ENCODE measurements at regions of chr9 and their contacts with region 1.

Region 1: DNA sequence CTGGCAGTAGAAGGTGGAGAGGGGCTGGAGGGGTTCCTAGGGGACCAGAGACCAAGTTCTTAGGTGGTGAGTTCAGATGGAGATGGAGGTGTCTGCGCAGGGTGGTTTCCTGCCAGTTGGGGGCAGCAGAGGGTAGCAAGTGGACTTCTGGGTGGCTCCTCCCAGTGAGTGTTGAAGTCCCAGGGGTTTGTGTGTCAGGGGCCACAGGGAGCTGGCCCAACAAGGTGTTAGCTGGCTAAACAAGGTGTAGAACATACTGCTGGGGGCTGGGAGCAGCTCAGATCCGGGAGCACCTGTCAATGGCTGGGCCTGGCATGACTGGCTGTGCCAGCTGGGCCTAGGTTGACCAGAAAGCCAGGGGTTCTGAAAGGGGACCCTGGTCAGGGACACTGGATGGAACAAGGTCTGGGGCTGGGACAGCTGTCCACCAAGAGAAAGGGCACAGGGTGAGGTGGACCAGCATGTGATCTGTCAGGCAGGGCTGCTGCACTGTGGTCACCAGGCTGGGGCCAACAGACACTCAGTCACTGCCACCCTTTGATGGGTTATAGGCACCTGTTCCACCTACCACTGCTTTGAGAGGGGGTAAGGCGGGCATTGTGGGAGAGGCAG is 35.6 kb downstream of the DAB2IP start:
- DNase-seq: peak; percentile 43
- ATAC-seq: peak; percentile 90
- H3K4me3 ChIP-seq: no peak overlapping the region
- H3K27ac ChIP-seq: no peak overlapping the region
- H3K4me1 ChIP-seq: peaks cover 0 to 23% of the 10 kb centered on the region in 2 experiments; a peak in 3 of 4 replicates
- H3K27me3 ChIP-seq: no peaks in the 10 kb centered on the region
- CTCF ChIP-seq: peak; percentile 86 to 97 (median 93)
- POLR2A ChIP-seq: no peak
- RAD21 ChIP-seq: peak; percentile 94

Region 2: GRCh38 chr9:121529237-121529987 is 157.6 kb before region 1 on chr9:
- CTCF ChIA-PET with region 1: no interaction called
- POLR2A ChIA-PET with region 1: no interaction called
- RAD21 ChIA-PET with region 1: no interaction called
- intact Hi-C with region 1: no loop called
- DNase-seq: no peak
- ATAC-seq: peak; percentile 74
- H3K4me3 ChIP-seq: no peak overlapping the region
- H3K27ac ChIP-seq: peak overlapping the region; percentile 0; the same call in 1 of the 2 replicates
- H3K4me1 ChIP-seq: peaks cover 5 to 10% of the 10 kb centered on the region in 2 experiments; a peak in 3 of 4 replicates
- H3K27me3 ChIP-seq: no peaks in the 10 kb centered on the region
- CTCF ChIP-seq: no peak
- POLR2A ChIP-seq: no peak
- RAD21 ChIP-seq: no peak

Region 3: GRCh38 chr9:121640076-121640475 is 47.0 kb before region 1 on chr9:
- CTCF ChIA-PET with region 1: interaction called, 17 read pairs
- POLR2A ChIA-PET with region 1: no interaction called
- RAD21 ChIA-PET with region 1: interaction called in 1 of 2 experiments, 3 read pairs
- intact Hi-C with region 1: loop called (anchors 5 kb)
- DNase-seq: no peak
- ATAC-seq: peak; percentile 88
- H3K4me3 ChIP-seq: no peak overlapping the region
- H3K27ac ChIP-seq: no peak overlapping the region
- H3K4me1 ChIP-seq: peaks cover 16 to 24% of the 10 kb centered on the region in 2 experiments
- H3K27me3 ChIP-seq: no peaks in the 10 kb centered on the region
- CTCF ChIP-seq: peak; percentile 53 to 74 (median 74); a peak in 5 of 6 replicates
- POLR2A ChIP-seq: no peak
- RAD21 ChIP-seq: peak; percentile 79

Region 4: GRCh38 chr9:121658166-121658565 is 28.9 kb before region 1 on chr9:
- CTCF ChIA-PET with region 1: interaction called, 11 read pairs
- POLR2A ChIA-PET with region 1: no interaction called
- RAD21 ChIA-PET with region 1: no interaction called
- intact Hi-C with region 1: no loop called
- DNase-seq: no peak
- ATAC-seq: no peak
- H3K4me3 ChIP-seq: no peak overlapping the region
- H3K27ac ChIP-seq: no peak overlapping the region
- H3K4me1 ChIP-seq: peaks cover 3 to 12% of the 10 kb centered on the region in 2 experiments; a peak in 2 of 4 replicates
- H3K27me3 ChIP-seq: no peaks in the 10 kb centered on the region
- CTCF ChIP-seq: no peak
- POLR2A ChIP-seq: no peak
- RAD21 ChIP-seq: no peak

Region 5: DNA sequence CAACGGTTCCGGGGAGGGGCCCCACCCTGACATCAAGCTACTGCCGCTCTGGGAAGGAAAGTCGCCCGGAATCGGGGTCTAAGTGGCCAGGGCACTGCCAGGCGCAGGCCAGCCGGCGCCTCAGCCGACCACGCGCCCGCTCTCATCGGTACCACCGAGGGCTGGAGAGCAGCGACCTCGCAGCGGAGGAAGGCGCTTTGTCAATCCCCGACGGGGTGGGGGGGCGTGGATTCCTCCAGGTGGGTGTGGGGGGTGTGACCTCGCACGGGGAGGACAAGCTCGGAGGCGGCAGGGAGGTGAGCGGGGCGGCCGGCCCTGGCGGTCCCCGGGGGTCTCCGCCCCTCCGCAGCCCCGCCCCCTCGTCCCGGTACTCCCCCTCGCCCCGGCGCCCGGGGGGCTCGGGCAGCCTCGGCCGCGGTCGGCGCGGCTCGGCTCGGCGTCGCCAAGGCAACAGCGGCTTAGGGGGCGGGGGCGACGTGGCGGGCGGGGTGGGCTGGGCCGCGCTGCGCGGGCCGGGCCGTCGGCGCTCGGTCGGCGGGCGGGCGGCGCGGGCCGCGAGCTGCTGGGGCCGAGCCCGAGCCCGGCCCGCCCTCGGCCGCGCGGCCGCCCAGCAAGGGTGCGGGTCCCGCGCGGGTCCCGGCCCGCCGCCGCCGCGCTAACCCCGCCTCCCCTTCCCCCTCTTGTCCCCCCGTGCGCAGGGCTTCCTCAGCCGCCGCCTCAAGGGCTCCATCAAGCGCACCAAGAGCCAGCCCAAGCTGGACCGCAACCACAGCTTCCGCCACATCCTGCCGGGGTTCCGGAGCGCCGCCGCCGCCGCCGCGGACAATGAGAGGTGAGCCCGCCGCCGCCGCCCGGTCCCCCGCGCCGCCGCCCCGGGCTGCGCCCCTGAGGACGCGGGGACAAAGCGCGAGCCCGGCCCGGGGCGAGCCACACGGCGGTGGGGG is 11.9 kb after region 1 on chr9:
- CTCF ChIA-PET with region 1: interaction called, 11 read pairs
- POLR2A ChIA-PET with region 1: no interaction called
- RAD21 ChIA-PET with region 1: no interaction called
- intact Hi-C with region 1: no loop called
- DNase-seq: no peak
- ATAC-seq: peak; percentile 74
- H3K4me3 ChIP-seq: peak overlapping the region; percentile 70 to 73
- H3K27ac ChIP-seq: peak overlapping the region; percentile 64; the same call in 1 of the 2 replicates
- H3K4me1 ChIP-seq: peaks cover 2 to 17% of the 10 kb centered on the region in 2 experiments; a peak in 3 of 4 replicates
- H3K27me3 ChIP-seq: no peaks in the 10 kb centered on the region
- CTCF ChIP-seq: no peak
- POLR2A ChIP-seq: no peak
- RAD21 ChIP-seq: no peak

Region 6: DNA sequence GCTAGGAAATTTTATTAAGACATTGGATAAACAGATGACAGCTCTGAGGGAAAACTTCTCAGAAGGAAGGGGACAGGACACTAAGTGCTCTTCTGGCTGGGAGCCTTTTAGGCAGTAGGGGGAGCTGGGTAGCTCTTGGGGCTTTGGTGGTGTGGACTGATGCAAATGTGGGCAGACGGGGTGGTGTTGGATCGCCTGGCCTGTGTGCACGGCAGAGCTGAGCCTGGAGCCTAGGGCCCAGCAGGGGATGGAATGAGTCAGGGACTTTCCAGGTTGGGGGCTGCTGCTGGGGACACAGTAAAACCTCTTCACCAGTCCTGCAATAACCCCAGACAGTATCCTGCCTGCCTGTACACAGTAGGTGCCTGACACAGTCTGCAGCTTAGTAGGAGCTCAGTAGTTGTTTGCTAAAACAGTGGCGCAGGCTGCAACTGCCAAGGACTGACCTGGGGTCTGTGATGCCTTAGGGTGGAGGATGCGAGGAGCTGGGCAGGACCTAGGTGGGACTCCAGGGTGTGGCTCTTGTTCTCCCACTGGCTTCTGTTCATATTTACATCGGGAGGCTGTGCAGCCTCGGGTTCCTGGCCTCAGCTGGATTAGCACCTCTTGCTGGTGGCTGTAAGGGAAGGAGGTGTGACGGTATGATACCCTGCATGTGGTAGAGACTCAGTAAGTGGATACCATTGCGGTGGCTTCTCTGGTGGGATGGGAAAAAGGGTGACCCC is 48.2 kb after region 1 on chr9:
- CTCF ChIA-PET with region 1: no interaction called
- POLR2A ChIA-PET with region 1: no interaction called
- RAD21 ChIA-PET with region 1: no interaction called
- intact Hi-C with region 1: loop called (anchors 5 kb)
- DNase-seq: no peak
- ATAC-seq: peak; percentile 81
- H3K4me3 ChIP-seq: peak overlapping the region; percentile 43 to 56
- H3K27ac ChIP-seq: peak overlapping the region; percentile 41
- H3K4me1 ChIP-seq: peaks cover 40 to 43% of the 10 kb centered on the region in 2 experiments
- H3K27me3 ChIP-seq: no peaks in the 10 kb centered on the region
- CTCF ChIP-seq: peak in 2 of 3 experiments; percentile 62 to 83; a peak in 4 of 6 replicates
- POLR2A ChIP-seq: no peak
- RAD21 ChIP-seq: no peak

Region 7: GRCh38 chr9:121798941-121799340 is 111.9 kb after region 1 on chr9:
- CTCF ChIA-PET with region 1: no interaction called
- POLR2A ChIA-PET with region 1: no interaction called
- RAD21 ChIA-PET with region 1: no interaction called
- intact Hi-C with region 1: no loop called
- DNase-seq: no peak
- ATAC-seq: no peak
- H3K4me3 ChIP-seq: no peak overlapping the region
- H3K27ac ChIP-seq: no peak overlapping the region
- H3K4me1 ChIP-seq: no peaks in the 10 kb centered on the region
- H3K27me3 ChIP-seq: peaks cover 20% of the 10 kb centered on the region
- CTCF ChIP-seq: no peak
- POLR2A ChIP-seq: no peak
- RAD21 ChIP-seq: no peak

Region 8: DNA sequence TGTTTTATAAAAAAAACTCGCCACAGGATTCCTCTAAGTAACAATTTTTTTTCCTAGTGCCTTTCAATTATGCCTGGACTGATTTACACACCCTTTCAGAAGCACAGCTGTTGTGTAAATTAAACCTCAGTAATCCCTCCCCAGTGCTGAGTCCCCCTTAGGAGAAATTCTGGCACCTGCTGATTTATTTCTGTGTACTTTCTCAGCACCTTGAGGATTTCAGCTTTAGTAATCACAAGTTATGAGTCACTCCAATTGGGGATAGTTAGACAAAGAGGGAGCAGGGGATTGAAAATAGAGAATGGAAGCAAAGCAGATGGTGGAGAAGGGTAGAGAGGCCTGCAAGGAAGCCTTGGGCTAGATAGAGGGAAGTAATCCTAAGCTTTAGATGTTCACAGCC is 234.4 kb after region 1 on chr9:
- CTCF ChIA-PET with region 1: no interaction called
- POLR2A ChIA-PET with region 1: no interaction called
- RAD21 ChIA-PET with region 1: no interaction called
- intact Hi-C with region 1: no loop called
- DNase-seq: no peak
- ATAC-seq: no peak
- H3K4me3 ChIP-seq: no peak overlapping the region
- H3K27ac ChIP-seq: no peak overlapping the region
- H3K4me1 ChIP-seq: no peaks in the 10 kb centered on the region
- H3K27me3 ChIP-seq: no peaks in the 10 kb centered on the region
- CTCF ChIP-seq: no peak
- POLR2A ChIP-seq: no peak
- RAD21 ChIP-seq: no peak

Region 9: GRCh38 chr9:121992571-121993212 is 305.7 kb after region 1 on chr9:
- CTCF ChIA-PET with region 1: interaction called, 4 read pairs
- POLR2A ChIA-PET with region 1: no interaction called
- RAD21 ChIA-PET with region 1: no interaction called
- intact Hi-C with region 1: loop called (anchors 1 kb)
- DNase-seq: peak; percentile 69
- ATAC-seq: peak; percentile 90
- H3K4me3 ChIP-seq: no peak overlapping the region
- H3K27ac ChIP-seq: no peak overlapping the region
- H3K4me1 ChIP-seq: no peaks in the 10 kb centered on the region
- H3K27me3 ChIP-seq: no peaks in the 10 kb centered on the region
- CTCF ChIP-seq: peak; percentile 66 to 90 (median 90)
- POLR2A ChIP-seq: no peak
- RAD21 ChIP-seq: peak; percentile 93

Region 10: GRCh38 chr9:122350638-122351355 is 663.8 kb after region 1 on chr9:
- CTCF ChIA-PET with region 1: no interaction called
- POLR2A ChIA-PET with region 1: no interaction called
- RAD21 ChIA-PET with region 1: no interaction called
- intact Hi-C with region 1: loop called (anchors 5 kb)
- DNase-seq: peak; percentile 27
- ATAC-seq: peak; percentile 91
- H3K4me3 ChIP-seq: no peak overlapping the region
- H3K27ac ChIP-seq: no peak overlapping the region
- H3K4me1 ChIP-seq: peaks cover 3 to 13% of the 10 kb centered on the region in 2 experiments; a peak in 3 of 4 replicates
- H3K27me3 ChIP-seq: no peaks in the 10 kb centered on the region
- CTCF ChIP-seq: peak; percentile 93 to 97 (median 93)
- POLR2A ChIP-seq: no peak
- RAD21 ChIP-seq: peak; percentile 99

Measured in HCT116 (cell line).